ENCODE measurements at regions of chr15 and their contacts with region 1.

Region 1: DNA sequence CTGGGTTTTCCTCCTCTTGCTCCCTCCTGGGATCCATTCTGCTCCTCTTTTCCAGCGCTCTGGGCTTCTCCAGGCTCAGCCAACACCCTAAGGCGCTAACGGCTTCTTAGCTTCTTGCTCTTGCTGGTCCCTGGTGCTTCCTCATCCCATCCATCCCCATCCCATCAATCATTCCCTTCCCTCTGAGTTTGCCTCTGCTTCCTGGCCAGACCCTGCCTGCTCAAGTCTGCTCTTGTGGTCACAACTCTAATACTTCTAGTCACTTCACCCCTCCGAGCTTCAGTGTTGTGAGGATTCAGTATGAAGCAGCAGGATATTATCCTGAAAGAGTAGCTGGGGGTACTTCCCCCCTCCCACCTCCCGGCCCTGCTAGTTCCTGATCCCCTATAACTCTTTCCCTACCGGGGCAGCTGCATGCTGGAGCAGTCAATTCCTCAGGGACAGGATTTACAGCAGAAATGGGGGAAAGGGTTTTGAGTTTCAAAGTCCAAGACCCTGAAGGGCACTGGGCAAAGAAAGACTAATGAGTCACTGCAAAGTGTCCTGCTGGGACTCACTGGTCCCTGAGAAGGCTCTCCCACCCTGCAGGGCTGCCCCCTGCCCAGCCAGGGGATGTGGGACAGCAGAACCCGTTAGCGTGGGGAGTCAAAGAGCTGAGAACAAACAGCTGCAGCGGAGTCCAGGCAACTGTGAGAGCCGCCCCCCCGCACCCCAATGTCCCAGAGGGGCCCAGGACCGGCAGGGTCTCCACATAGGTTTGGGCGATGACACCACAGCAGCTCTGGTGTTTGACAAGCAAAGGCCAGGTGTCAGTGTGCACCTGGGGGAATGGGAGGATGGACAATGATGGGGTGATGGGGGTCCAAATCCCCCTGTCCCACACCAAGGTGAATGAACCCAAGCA is 2.3 kb upstream of the SYNM start:
- DNase-seq: peak in 1 of 2 donors; percentile 11
- H3K4me3 ChIP-seq: no peak overlapping the region
- H3K27ac ChIP-seq: no peak overlapping the region
- H3K4me1 ChIP-seq: no peaks in the 10 kb centered on the region
- H3K27me3 ChIP-seq: no peaks in the 10 kb centered on the region
- CTCF ChIP-seq: no peak
- POLR2A ChIP-seq: no peak

Region 2: DNA sequence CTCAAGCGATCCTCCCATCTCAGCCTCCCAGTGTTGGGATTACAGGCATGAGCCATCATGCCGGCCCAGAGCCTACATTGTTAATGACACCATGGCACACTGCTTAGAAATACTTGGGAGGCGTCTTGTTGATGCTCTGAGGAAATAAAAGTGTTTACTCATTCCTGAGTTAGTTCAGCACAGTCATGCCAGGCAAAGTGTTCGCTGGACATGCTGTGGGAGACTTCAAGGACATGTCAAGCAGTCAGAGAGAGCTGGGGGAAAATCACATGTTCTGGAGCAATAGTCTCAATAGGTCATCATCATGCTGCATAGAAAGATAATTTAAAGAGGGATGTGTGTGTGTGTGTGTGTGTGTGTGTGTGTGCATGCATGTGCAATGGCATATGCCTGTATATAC is 109.3 kb after region 1 on chr15:
- intact Hi-C with region 1: loop called (anchors 2 kb)
- DNase-seq: no peak
- H3K4me3 ChIP-seq: no peak overlapping the region
- H3K27ac ChIP-seq: peak overlapping the region; percentile 68 to 69
- H3K4me1 ChIP-seq: no peaks in the 10 kb centered on the region
- H3K27me3 ChIP-seq: no peaks in the 10 kb centered on the region
- CTCF ChIP-seq: no peak
- POLR2A ChIP-seq: no peak